H1 (cell line): ENCODE measurements at regions of chr16 and their contacts with region 1.

Region 1: GRCh38 chr16:87571136-87571867 is 31.0 kb upstream of the JPH3 start:
- DNase-seq: peak in 1 of 2 experiments; percentile 85
- H3K4me3 ChIP-seq: no peak overlapping the region
- H3K27ac ChIP-seq: no peak overlapping the region
- H3K4me1 ChIP-seq: peaks cover 3 to 16% (median 9%) of the 10 kb centered on the region in 4 experiments
- H3K27me3 ChIP-seq: no peaks in the 10 kb centered on the region
- CTCF ChIP-seq: peak; percentile 73 to 79 (median 74)
- EP300 ChIP-seq: no peak
- POLR2A ChIP-seq: no peak
- RAD21 ChIP-seq: peak; percentile 58 to 69

Region 2: GRCh38 chr16:87499189-87499486 is 72.2 kb before region 1 on chr16:
- CTCF ChIA-PET with region 1: interaction called, 11 read pairs
- POLR2A ChIA-PET with region 1: no interaction called
- DNase-seq: no peak
- H3K4me3 ChIP-seq: no peak overlapping the region
- H3K27ac ChIP-seq: no peak overlapping the region
- H3K4me1 ChIP-seq: no peaks in the 10 kb centered on the region; a peak in 1 of 7 replicates
- H3K27me3 ChIP-seq: no peaks in the 10 kb centered on the region; a peak in 1 of 7 replicates
- CTCF ChIP-seq: no peak
- EP300 ChIP-seq: no peak
- POLR2A ChIP-seq: no peak
- RAD21 ChIP-seq: no peak

Region 3: DNA sequence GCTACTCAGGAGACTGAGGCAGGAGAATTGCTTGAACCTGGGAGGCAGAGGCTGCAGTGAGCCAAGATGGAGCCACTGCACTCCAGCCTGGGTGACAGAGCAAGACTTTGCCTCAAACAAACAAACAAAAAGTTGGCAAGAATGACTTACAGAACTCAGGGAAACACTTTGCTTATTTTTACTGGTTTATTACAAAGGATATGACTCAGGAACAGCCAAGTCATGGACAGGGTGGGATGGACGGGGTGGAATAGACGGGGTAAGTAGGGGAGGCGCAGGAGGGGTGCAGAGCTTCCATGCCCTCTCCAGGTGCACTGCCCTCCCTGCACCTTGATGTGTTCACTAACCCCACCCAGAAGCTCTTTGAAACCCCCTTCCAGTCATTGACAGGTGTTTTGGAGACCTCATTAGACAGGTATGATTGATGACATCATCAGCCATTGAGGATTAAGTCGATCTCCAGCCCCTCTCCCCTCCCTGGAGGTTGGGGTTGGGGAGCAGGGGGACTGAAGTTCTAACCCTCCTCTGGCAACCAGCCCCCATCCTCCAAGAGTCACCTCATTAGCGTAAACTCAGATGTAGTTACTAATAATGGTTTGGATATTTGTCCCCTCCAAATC is 37.2 kb before region 1 on chr16:
- CTCF ChIA-PET with region 1: interaction called, 11 read pairs
- POLR2A ChIA-PET with region 1: no interaction called
- DNase-seq: no peak
- H3K4me3 ChIP-seq: no peak overlapping the region
- H3K27ac ChIP-seq: no peak overlapping the region
- H3K4me1 ChIP-seq: peaks cover 0 to 2% (median under 1%) of the 10 kb centered on the region in 4 experiments; a peak in 3 of 7 replicates
- H3K27me3 ChIP-seq: no peaks in the 10 kb centered on the region
- CTCF ChIP-seq: no peak
- EP300 ChIP-seq: no peak
- POLR2A ChIP-seq: no peak
- RAD21 ChIP-seq: no peak

Region 4: GRCh38 chr16:87550496-87550961 is 20.8 kb before region 1 on chr16:
- CTCF ChIA-PET with region 1: interaction called, 20 read pairs
- POLR2A ChIA-PET with region 1: no interaction called
- DNase-seq: peak in 1 of 2 experiments; percentile 95
- H3K4me3 ChIP-seq: no peak overlapping the region
- H3K27ac ChIP-seq: no peak overlapping the region
- H3K4me1 ChIP-seq: no peaks in the 10 kb centered on the region; a peak in 2 of 7 replicates
- H3K27me3 ChIP-seq: no peaks in the 10 kb centered on the region; a peak in 1 of 7 replicates
- CTCF ChIP-seq: peak; percentile 81 to 90 (median 89)
- EP300 ChIP-seq: no peak
- POLR2A ChIP-seq: no peak
- RAD21 ChIP-seq: peak; percentile 65 to 75

Region 5: GRCh38 chr16:87581833-87582203 is 10.5 kb after region 1 on chr16:
- CTCF ChIA-PET with region 1: interaction called, 169 read pairs
- POLR2A ChIA-PET with region 1: interaction called, 9 read pairs
- DNase-seq: no peak
- H3K4me3 ChIP-seq: no peak overlapping the region
- H3K27ac ChIP-seq: no peak overlapping the region
- H3K4me1 ChIP-seq: peaks cover 1 to 15% (median 8%) of the 10 kb centered on the region in 4 experiments
- H3K27me3 ChIP-seq: 0 out of 7 replicates have a peak, but pooled peaks cover 0 to 2% (median 0%) of the 10 kb centered on the region in 4 experiments
- CTCF ChIP-seq: no peak
- EP300 ChIP-seq: no peak
- POLR2A ChIP-seq: no peak
- RAD21 ChIP-seq: no peak

Region 6: DNA sequence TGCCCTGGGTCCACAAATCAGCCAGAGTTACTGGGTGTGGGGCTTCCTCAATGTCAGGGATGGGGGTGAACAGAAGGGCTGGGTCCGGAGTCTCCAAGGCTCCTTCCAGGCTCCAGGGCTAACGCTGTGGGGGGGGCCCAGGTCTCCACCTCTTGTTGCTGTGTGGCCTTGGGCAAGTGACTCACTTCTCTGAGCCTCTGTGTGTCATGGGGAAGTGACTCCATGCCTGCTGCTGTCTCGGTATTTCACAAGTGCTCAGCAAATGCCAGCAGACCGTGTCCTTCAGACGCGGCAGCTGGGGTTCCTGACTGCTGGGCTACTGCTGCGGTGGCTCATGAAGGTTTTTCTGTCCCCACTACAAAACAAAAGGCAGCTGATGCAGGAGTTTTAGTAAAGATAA is 57.6 kb after region 1 on chr16:
- CTCF ChIA-PET with region 1: interaction called, 13 read pairs
- POLR2A ChIA-PET with region 1: no interaction called
- DNase-seq: no peak
- H3K4me3 ChIP-seq: no peak overlapping the region
- H3K27ac ChIP-seq: no peak overlapping the region
- H3K4me1 ChIP-seq: no peaks in the 10 kb centered on the region; a peak in 2 of 7 replicates
- H3K27me3 ChIP-seq: no peaks in the 10 kb centered on the region
- CTCF ChIP-seq: no peak
- EP300 ChIP-seq: no peak
- POLR2A ChIP-seq: no peak
- RAD21 ChIP-seq: no peak

Region 7: DNA sequence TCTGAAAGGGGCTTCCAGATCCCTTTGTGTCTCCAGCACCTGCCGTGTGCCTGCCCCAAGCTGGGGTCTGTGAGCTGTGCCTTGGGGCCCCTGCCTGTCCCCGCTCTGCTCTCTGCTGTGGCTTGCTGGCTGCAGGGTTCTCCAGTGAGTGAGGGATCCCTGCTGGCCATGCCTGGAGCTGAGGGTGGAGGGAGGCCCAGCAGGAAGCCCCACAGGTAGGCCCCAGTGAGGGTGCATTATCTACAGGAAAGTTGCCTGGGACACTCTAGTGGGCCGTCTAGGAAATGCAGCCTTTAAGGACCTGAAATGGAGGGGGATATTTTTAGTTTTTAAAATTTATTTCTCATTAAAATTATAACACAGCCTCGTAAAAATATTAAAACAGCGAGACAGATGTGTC is 81.9 kb after region 1 on chr16:
- CTCF ChIA-PET with region 1: interaction called, 28 read pairs
- POLR2A ChIA-PET with region 1: no interaction called
- DNase-seq: no peak
- H3K4me3 ChIP-seq: no peak overlapping the region
- H3K27ac ChIP-seq: no peak overlapping the region
- H3K4me1 ChIP-seq: peaks cover 0 to 19% (median 4%) of the 10 kb centered on the region in 4 experiments; a peak in 4 of 7 replicates
- H3K27me3 ChIP-seq: no peaks in the 10 kb centered on the region
- CTCF ChIP-seq: peak; percentile 14 to 48 (median 33)
- EP300 ChIP-seq: no peak
- POLR2A ChIP-seq: no peak
- RAD21 ChIP-seq: peak; percentile 27 to 33; a peak in 3 of 4 replicates

Region 8: DNA sequence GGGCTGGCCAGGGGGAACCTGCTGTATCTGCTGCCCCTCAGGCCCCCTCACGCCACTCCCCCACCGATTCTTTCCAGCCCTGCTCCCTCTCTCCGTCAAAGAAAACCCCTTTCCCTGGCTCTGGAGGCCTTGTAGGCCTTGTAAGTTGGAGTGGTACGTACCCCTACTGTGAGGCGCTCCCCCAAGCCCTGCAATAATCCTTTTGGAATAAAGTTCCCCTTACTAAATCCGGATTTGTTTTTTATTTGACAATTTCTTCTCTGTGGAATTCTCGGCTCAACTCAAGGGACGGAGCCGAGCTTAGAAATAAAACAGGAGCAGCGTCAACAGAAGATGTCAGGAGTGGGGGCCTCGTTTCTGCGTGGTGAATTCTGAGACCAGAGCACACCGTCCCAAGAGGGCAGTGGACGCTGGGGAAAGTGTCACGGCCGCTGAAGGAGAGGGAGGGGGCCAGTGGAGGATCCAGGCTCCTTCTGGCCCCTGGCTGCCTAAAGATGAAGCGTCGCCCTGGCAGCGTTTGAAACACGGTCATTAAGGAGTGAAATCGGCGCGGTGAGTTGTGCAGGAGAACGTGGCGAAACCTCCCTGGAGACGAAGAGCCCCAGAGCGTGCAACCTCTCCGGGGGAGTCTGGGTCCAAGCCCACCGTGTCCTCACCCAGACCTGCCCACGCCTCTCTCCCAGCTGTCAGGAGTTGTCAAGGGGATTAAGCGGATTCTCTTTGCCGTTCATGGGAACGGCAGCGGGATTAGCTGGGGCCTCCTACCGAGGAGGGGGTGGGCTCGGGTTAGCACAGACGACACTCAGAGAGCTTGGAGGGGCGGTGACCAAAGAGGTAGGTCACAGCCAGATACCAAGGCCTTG is 251.0 kb after region 1 on chr16:
- CTCF ChIA-PET with region 1: no interaction called
- POLR2A ChIA-PET with region 1: no interaction called
- DNase-seq: no peak
- H3K4me3 ChIP-seq: no peak overlapping the region; a peak in 1 of 8 replicates
- H3K27ac ChIP-seq: no peak overlapping the region
- H3K4me1 ChIP-seq: peaks cover 15 to 53% (median 41%) of the 10 kb centered on the region in 4 experiments
- H3K27me3 ChIP-seq: no peaks in the 10 kb centered on the region
- CTCF ChIP-seq: no peak
- EP300 ChIP-seq: no peak
- POLR2A ChIP-seq: no peak
- RAD21 ChIP-seq: no peak